Activated CD8-positive, alpha-beta T cell treated with anti-CD3 and anti-CD28 coated beads, Interleukin-2, amount 10 ng/mL, durations not matched to agents 7 days and 5 days (primary cell): ENCODE measurements at regions of chr16 and their contacts with region 1.

Region 1: DNA sequence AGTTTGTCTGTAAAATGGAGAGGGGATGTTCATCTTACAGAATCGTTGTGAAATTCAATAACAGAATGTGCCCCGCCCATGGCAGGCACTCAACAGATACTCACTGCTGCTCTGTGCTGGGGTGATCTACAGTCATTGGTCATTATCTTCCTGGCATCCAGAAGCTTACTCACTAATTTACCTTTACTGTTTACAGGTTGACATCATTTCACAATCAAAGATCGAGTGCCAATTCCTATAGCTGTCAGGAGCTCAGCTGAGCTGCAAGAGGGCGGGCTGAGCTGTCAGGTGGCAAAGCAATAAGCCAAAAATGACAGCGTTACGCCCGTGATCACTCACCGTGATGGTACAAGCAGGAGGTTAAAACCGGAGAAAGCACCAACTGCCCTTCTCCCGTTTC is 51.2 kb downstream of the LITAF start:
- DNase-seq: no peak
- ATAC-seq: no peak
- H3K4me3 Mint-ChIP-seq: no peak overlapping the region
- H3K27ac Mint-ChIP-seq: no peak overlapping the region
- H3K4me1 Mint-ChIP-seq: peaks cover 1% of the 10 kb centered on the region
- H3K27me3 Mint-ChIP-seq: peaks cover 2% of the 10 kb centered on the region

Region 2: GRCh38 chr16:11407047-11407982 is 128.2 kb before region 1 on chr16:
- CTCF ChIA-PET with region 1: interaction called, 38 read pairs
- POLR2A ChIA-PET with region 1: no interaction called
- DNase-seq: peak; percentile 77
- ATAC-seq: peak; percentile 62
- H3K4me3 Mint-ChIP-seq: no peak overlapping the region
- H3K27ac Mint-ChIP-seq: no peak overlapping the region
- H3K4me1 Mint-ChIP-seq: peaks cover 2% of the 10 kb centered on the region
- H3K27me3 Mint-ChIP-seq: no peaks in the 10 kb centered on the region

Region 3: DNA sequence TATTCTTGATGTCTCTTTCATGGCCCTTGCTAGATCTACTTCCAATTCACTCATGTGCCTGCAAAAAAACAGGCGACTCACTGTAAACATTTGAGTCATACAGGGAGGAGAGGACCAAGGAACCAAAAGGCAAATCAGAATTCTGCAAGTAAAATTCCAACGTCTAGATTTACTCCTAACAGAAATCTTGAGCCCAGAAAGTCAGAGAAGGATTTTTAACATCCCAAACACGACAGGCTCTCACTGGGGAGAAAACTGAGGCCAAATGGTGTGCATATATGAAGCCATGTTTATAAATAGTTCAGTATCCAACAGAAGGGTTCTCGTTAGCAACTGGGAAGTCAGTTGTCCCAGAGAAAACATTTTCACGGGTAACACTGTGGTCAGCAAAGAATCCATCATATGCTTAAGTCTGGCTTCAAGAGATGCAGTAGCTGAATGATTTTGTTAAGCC is 11.2 kb after region 1 on chr16:
- CTCF ChIA-PET with region 1: interaction called, 10 read pairs
- POLR2A ChIA-PET with region 1: no interaction called
- DNase-seq: no peak
- ATAC-seq: no peak
- H3K4me3 Mint-ChIP-seq: no peak overlapping the region
- H3K27ac Mint-ChIP-seq: no peak overlapping the region
- H3K4me1 Mint-ChIP-seq: peaks cover 2% of the 10 kb centered on the region
- H3K27me3 Mint-ChIP-seq: no peaks in the 10 kb centered on the region

Region 4: DNA sequence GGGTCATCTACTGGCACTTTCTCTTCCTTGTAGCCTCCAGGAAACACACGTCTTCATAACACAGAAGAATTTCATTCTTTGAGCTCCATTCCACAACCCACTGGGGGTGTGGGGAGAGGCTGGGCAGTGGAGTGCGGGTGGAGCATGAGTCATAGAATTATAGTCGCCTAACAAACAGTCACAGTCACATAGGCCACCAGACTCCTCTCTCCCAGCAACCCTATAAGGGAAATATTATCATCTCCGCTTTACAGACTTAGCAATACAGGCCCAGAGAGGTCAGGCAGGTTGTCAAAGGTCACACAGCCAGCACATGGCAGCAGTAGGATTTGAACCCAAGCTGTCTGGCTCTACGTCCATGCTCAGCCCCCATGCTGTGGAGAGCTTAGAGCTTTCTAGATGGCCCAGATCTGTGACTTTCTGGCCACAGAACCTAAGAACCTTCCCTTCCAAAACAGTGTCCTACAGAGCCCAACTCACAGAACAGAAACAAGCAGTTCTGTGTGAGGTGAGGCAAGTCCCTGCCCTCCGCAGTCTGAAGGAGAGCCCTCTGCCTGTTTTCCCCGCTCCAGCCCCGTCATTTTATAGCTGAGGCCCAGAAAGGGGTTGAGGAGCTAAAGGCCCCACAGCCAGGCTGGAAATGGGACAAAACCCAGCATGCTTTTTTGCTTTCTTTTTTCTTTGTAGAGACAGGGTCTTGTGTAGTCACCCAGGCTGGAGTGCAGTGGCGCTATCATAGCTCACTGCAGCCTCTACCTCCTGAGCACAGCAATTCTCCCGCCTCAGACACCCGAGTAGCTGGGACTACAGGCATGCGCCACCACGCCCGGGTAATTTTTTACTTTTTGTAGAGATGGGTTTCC is 62.0 kb after region 1 on chr16:
- CTCF ChIA-PET with region 1: interaction called, 11 read pairs
- POLR2A ChIA-PET with region 1: interaction called, 3 read pairs
- DNase-seq: no peak
- ATAC-seq: peak; percentile 56
- H3K4me3 Mint-ChIP-seq: no peak overlapping the region
- H3K27ac Mint-ChIP-seq: no peak overlapping the region
- H3K4me1 Mint-ChIP-seq: peaks cover 30% of the 10 kb centered on the region
- H3K27me3 Mint-ChIP-seq: no peaks in the 10 kb centered on the region

Region 5: GRCh38 chr16:11658894-11659708 is 123.6 kb after region 1 on chr16:
- CTCF ChIA-PET with region 1: interaction called, 12 read pairs
- POLR2A ChIA-PET with region 1: interaction called, 3 read pairs
- DNase-seq: no peak
- ATAC-seq: no peak
- H3K4me3 Mint-ChIP-seq: no peak overlapping the region
- H3K27ac Mint-ChIP-seq: no peak overlapping the region
- H3K4me1 Mint-ChIP-seq: peaks cover 24% of the 10 kb centered on the region
- H3K27me3 Mint-ChIP-seq: peaks cover 4% of the 10 kb centered on the region

Region 6: GRCh38 chr16:11715246-11715947 is 179.9 kb after region 1 on chr16:
- CTCF ChIA-PET with region 1: interaction called, 47 read pairs
- POLR2A ChIA-PET with region 1: no interaction called
- DNase-seq: no peak
- ATAC-seq: no peak
- H3K4me3 Mint-ChIP-seq: no peak overlapping the region
- H3K27ac Mint-ChIP-seq: no peak overlapping the region
- H3K4me1 Mint-ChIP-seq: peaks cover 11% of the 10 kb centered on the region
- H3K27me3 Mint-ChIP-seq: no peaks in the 10 kb centered on the region